Uterus (tissue), 4 donors: ENCODE measurements at regions of chr2 and their contacts with region 1.

Region 1: GRCh38 chr2:3208179-3208578 is 169.4 kb downstream of the EIPR1 start:
- DNase-seq: no peak
- H3K4me3 ChIP-seq: no peak overlapping the region
- H3K27ac ChIP-seq: no peak overlapping the region
- H3K4me1 ChIP-seq: no peaks in the 10 kb centered on the region
- H3K27me3 ChIP-seq: no peaks in the 10 kb centered on the region
- CTCF ChIP-seq: no peak
- POLR2A ChIP-seq: no peak

Region 2: GRCh38 chr2:3186791-3187190 is 21.4 kb before region 1 on chr2:
- intact Hi-C with region 1: loop called (anchors 2 kb)
- DNase-seq: no peak
- H3K4me3 ChIP-seq: no peak overlapping the region
- H3K27ac ChIP-seq: no peak overlapping the region
- H3K4me1 ChIP-seq: no peaks in the 10 kb centered on the region
- H3K27me3 ChIP-seq: no peaks in the 10 kb centered on the region
- CTCF ChIP-seq: no peak
- POLR2A ChIP-seq: no peak

Region 3: GRCh38 chr2:4553241-4553640 is 1345.1 kb after region 1 on chr2:
- intact Hi-C with region 1: no loop called
- DNase-seq: no peak
- H3K4me3 ChIP-seq: no peak overlapping the region
- H3K27ac ChIP-seq: no peak overlapping the region
- H3K4me1 ChIP-seq: no peaks in the 10 kb centered on the region
- H3K27me3 ChIP-seq: no peaks in the 10 kb centered on the region
- CTCF ChIP-seq: no peak
- POLR2A ChIP-seq: no peak